Body of pancreas (tissue), 4 donors: ENCODE measurements at regions of chr16 and their contacts with region 1.

Region 1: GRCh38 chr16:56519459-56520250 is at the start of gene BBS2:
- DNase-seq: peak; percentile 91 to 95 (median 94)
- ATAC-seq: peak; percentile 97
- H3K4me3 ChIP-seq: peak within 1 kb of the TSS; percentile 69 to 77
- H3K27ac ChIP-seq: peak within 1 kb of the TSS; percentile 79 to 88 (median 88)
- H3K4me1 ChIP-seq: peaks cover 28% of the 10 kb centered on the region
- H3K27me3 ChIP-seq: no peaks in the 10 kb centered on the region
- CTCF ChIP-seq: peak in 4 of 7 experiments; percentile 19 to 36 (median 28)
- POLR2A ChIP-seq: peak; percentile 65 to 91 (median 90)
- total RNA-seq, gene BBS2: 14.3 to 19.1 TPM

Region 2: DNA sequence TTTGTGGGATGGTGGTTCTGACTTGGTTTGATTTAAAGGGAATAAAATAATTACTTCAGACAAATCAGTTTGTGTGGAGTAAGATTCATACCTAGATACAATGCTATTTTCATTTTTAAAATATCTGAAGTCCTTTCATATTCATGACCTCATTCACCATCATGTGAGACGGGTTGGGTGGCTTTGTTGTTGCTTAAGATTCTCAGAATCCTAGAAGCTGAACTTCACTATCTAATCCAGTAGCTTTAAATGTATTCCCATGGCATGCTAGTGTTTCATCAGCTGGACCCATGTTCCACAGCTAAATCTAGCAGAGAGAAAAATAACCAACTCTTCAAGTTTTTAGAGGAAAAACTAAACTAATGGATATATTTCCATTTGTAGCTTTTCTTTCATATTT is 91.6 kb before region 1 on chr16:
- intact Hi-C with region 1: no loop called
- DNase-seq: no peak
- ATAC-seq: no peak
- H3K4me3 ChIP-seq: no peak overlapping the region
- H3K27ac ChIP-seq: no peak overlapping the region
- H3K4me1 ChIP-seq: peaks cover 12% of the 10 kb centered on the region
- H3K27me3 ChIP-seq: no peaks in the 10 kb centered on the region
- CTCF ChIP-seq: no peak
- POLR2A ChIP-seq: no peak

Region 3: GRCh38 chr16:56708525-56709442 is 189.1 kb after region 1 on chr16:
- intact Hi-C with region 1: loop called (anchors 10 kb)
- DNase-seq: no peak
- ATAC-seq: no peak
- H3K4me3 ChIP-seq: no peak overlapping the region
- H3K27ac ChIP-seq: no peak overlapping the region
- H3K4me1 ChIP-seq: no peaks in the 10 kb centered on the region
- H3K27me3 ChIP-seq: no peaks in the 10 kb centered on the region
- CTCF ChIP-seq: no peak
- POLR2A ChIP-seq: no peak